K562 (cell line): ENCODE measurements at regions of chr5 and their contacts with region 1.

Region 1: DNA sequence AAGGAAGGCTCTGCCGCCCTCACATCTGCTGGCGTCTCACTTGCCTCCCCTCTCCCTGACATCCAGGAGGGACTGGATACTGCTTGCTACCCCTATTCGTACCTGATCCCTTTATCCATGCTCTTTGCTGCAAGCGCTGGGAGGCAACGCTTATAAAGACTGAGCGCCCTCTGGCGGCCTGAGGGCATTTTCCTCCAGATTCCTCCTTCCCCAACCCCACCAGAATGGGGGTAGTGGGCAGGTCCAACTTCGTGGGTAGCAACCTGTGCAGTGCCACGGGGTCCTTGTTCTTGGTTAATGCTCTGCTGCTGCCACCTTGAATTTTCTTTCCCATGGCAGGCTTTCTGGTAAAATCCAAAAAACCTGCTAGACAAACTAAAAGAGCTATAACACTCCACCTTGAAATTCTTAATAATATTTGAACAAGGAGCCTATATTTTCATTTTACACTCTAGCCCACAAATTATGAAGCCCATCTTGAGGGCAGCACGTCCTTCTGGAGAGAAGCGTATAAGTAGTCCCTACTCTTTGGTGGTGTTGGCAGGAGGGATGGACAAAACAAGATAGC is 52.4 kb downstream of the JADE2 start:
- DNase-seq: peak; percentile 77 to 85 (median 80)
- ATAC-seq: peak; percentile 93
- H3K4me3 ChIP-seq: no peak overlapping the region
- H3K27ac ChIP-seq: no peak overlapping the region
- H3K4me1 ChIP-seq: peaks cover 0 to 15% of the 10 kb centered on the region in 2 experiments; a peak in 1 of 5 replicates
- H3K27me3 ChIP-seq: no peaks in the 10 kb centered on the region
- CTCF ChIP-seq: peak; percentile 83 to 94 (median 89)
- EP300 ChIP-seq: no peak
- POLR2A ChIP-seq: no peak
- RAD21 ChIP-seq: peak; percentile 74 to 95

Region 2: GRCh38 chr5:134209477-134210240 is 368.2 kb before region 1 on chr5:
- CTCF ChIA-PET with region 1: no interaction called
- POLR2A ChIA-PET with region 1: no interaction called
- in situ Hi-C with region 1: loop called (anchors 10 kb)
- intact Hi-C with region 1: no loop called
- DNase-seq: no peak
- ATAC-seq: no peak
- H3K4me3 ChIP-seq: no peak overlapping the region
- H3K27ac ChIP-seq: no peak overlapping the region
- H3K4me1 ChIP-seq: no peaks in the 10 kb centered on the region; a peak in 1 of 5 replicates
- H3K27me3 ChIP-seq: no peaks in the 10 kb centered on the region
- CTCF ChIP-seq: no peak
- EP300 ChIP-seq: no peak
- POLR2A ChIP-seq: no peak
- RAD21 ChIP-seq: no peak

Region 3: DNA sequence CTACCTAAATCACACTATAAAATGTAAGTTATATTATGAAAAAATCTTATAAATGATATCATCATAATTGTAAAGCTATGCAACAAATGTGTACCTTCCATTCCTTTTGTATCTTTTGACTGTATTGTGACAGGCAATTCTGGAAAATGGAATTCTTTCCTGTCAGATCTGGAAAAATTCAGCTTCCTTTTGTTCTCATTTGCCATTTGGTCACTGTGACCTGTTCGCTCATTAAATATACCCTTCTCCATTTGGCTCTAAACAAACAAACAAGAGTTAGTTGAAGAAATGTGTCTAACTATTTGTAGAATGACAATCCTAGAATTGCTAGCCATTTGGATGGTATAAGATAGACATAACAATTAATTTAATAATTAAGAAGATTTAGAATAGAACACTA is 273.6 kb before region 1 on chr5:
- CTCF ChIA-PET with region 1: interaction called, 35 read pairs
- POLR2A ChIA-PET with region 1: interaction called, 3 read pairs
- in situ Hi-C with region 1: loop called (anchors 5 kb)
- intact Hi-C with region 1: loop called (anchors 2 kb)
- DNase-seq: no peak
- ATAC-seq: no peak
- H3K4me3 ChIP-seq: no peak overlapping the region
- H3K27ac ChIP-seq: no peak overlapping the region
- H3K4me1 ChIP-seq: no peaks in the 10 kb centered on the region
- H3K27me3 ChIP-seq: no peaks in the 10 kb centered on the region
- CTCF ChIP-seq: no peak
- EP300 ChIP-seq: no peak
- POLR2A ChIP-seq: no peak
- RAD21 ChIP-seq: no peak